Prostate gland (tissue), 2 donors: ENCODE measurements at regions of chr9 and their contacts with region 1.

Region 1: GRCh38 chr9:23361096-23361495 is 464.9 kb downstream of the ELAVL2 start:
- DNase-seq: no peak
- H3K4me3 ChIP-seq: no peak overlapping the region
- H3K27ac ChIP-seq: no peak overlapping the region
- H3K4me1 ChIP-seq: no peaks in the 10 kb centered on the region
- H3K27me3 ChIP-seq: no peaks in the 10 kb centered on the region
- CTCF ChIP-seq: no peak
- POLR2A ChIP-seq: no peak

Region 2: DNA sequence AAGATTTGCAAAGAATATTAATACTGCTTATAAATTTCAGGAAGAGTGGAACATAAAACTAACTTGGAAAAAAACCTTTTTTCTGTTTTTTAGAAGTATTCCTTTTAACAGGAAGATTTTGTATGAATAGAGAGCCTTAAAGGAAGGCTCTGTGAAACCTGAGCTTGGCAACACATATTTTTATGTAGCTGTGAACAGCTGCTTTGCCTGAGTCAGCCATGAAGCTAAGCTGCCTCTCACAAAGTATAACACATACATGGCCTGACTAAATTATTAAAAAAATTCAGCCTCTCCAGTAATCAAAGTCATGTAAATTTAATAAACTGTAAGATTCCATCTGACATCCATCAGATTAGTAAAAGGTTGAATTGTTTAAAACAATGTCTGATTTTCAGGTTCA is 82.5 kb before region 1 on chr9:
- intact Hi-C with region 1: no loop called
- DNase-seq: no peak
- H3K4me3 ChIP-seq: no peak overlapping the region
- H3K27ac ChIP-seq: no peak overlapping the region
- H3K4me1 ChIP-seq: no peaks in the 10 kb centered on the region
- H3K27me3 ChIP-seq: no peaks in the 10 kb centered on the region
- CTCF ChIP-seq: no peak
- POLR2A ChIP-seq: no peak

Region 3: GRCh38 chr9:23426144-23426543 is 65.0 kb after region 1 on chr9:
- intact Hi-C with region 1: loop called (anchors 10 kb)
- DNase-seq: no peak
- H3K4me3 ChIP-seq: no peak overlapping the region
- H3K27ac ChIP-seq: no peak overlapping the region
- H3K4me1 ChIP-seq: no peaks in the 10 kb centered on the region
- H3K27me3 ChIP-seq: no peaks in the 10 kb centered on the region
- CTCF ChIP-seq: no peak
- POLR2A ChIP-seq: no peak